HCT116 (cell line): ENCODE measurements at regions of chr1 and their contacts with region 1.

Region 1: DNA sequence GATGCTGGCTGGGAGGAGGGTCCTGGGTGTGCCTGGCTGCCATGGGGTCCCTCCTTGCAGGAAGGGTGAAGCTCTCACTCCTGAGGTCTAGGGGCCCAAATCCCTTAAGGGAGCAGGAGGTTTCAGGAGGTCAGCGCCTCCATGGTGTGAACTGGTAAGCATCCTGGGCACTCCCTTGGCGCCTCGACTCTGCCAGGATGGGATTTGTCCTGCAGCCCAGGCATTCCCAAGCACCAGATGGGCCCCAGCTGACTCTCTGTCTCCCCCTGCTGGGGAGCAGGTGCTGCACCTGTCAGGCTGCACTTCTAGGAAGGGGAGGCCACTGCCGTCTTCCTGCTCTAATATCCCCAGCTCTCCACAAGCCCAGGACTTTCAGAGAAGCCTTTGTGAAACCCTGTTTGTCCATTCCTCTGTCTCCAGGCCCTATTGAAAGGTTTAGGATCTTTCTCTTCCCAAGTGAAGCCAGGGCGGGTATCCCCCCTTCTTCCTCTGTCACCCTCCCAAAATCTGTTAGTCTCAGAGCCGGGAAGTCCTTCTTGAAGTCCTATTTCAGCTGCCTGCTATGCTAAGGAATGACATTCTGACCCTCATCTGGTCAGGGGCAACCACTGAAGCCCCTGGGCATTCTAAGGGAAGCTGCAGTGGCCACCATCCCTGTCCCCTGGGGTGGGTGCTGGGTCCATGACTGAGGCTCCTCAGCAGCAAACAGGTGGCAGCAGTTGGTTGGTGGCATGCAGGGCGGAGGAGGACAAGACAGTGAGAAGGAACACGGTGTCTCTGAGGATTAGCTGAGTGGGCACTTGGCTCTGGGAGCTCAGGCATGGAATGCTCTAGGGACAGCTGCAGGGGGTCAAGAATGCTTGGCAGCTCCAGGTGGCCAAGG is 3.3 kb downstream of the MYBPH start:
- DNase-seq: no peak
- ATAC-seq: peak; percentile 87
- H3K4me3 ChIP-seq: no peak overlapping the region
- H3K27ac ChIP-seq: no peak overlapping the region
- H3K4me1 ChIP-seq: peaks cover 18 to 67% of the 10 kb centered on the region in 2 experiments
- H3K27me3 ChIP-seq: no peaks in the 10 kb centered on the region
- CTCF ChIP-seq: peak; percentile 75 to 93 (median 84)
- POLR2A ChIP-seq: no peak
- RAD21 ChIP-seq: peak; percentile 78

Region 2: DNA sequence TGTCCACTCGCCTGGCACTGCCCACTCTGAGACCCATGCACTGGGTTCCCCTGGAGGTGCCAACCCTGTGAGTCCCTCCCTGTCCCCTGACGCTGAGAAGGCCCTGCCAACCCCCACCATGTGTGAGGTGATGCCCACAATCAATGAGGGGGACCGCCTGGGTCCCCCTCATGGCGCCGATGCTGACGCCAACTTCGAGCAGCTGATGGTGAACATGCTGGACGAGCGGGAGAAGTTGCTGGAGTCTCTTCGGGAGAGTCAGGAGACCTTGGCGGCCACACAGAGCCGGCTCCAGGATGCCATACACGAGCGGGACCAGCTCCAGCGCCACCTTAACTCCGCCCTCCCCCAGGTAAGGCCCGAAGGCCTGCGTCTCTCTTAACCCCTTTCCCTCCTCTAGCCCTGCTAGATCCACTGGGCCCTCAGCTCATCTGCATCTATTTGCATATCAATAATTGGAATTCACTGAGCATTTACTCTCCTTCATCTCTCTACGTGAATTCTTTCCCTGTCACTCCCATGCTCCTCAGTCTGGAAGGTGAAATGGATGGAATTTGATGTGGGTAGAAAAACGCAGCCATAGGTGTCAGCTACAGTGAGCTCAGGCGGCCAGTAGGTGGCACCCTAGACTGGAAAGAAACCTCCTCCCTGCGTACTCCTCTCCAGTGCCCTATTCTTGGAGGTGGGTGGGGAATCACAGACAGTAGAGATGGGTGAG is 133.3 kb before region 1 on chr1:
- CTCF ChIA-PET with region 1: interaction called, 43 read pairs
- POLR2A ChIA-PET with region 1: no interaction called
- RAD21 ChIA-PET with region 1: interaction called, 4 read pairs
- intact Hi-C with region 1: loop called (anchors 1 kb)
- DNase-seq: no peak
- ATAC-seq: peak; percentile 92
- H3K4me3 ChIP-seq: no peak overlapping the region
- H3K27ac ChIP-seq: no peak overlapping the region
- H3K4me1 ChIP-seq: peaks cover 0 to 22% of the 10 kb centered on the region in 2 experiments; a peak in 2 of 4 replicates
- H3K27me3 ChIP-seq: no peaks in the 10 kb centered on the region
- CTCF ChIP-seq: peak; percentile 83 to 97 (median 92)
- POLR2A ChIP-seq: no peak
- RAD21 ChIP-seq: peak; percentile 89

Region 3: GRCh38 chr1:203117611-203118575 is 54.5 kb before region 1 on chr1:
- CTCF ChIA-PET with region 1: interaction called, 42 read pairs
- POLR2A ChIA-PET with region 1: no interaction called
- RAD21 ChIA-PET with region 1: interaction called, 6 to 9 read pairs
- intact Hi-C with region 1: loop called (anchors 1 kb)
- DNase-seq: peak; percentile 52
- ATAC-seq: peak; percentile 100
- H3K4me3 ChIP-seq: no peak overlapping the region
- H3K27ac ChIP-seq: no peak overlapping the region
- H3K4me1 ChIP-seq: peaks cover 0 to 10% of the 10 kb centered on the region in 2 experiments; a peak in 1 of 4 replicates
- H3K27me3 ChIP-seq: peaks cover 21% of the 10 kb centered on the region; the same call in 1 of the 2 replicates
- CTCF ChIP-seq: peak; percentile 79 to 87 (median 80)
- POLR2A ChIP-seq: no peak
- RAD21 ChIP-seq: peak; percentile 95